Heart right ventricle (tissue), 16 donors: ENCODE measurements at regions of chr9 and their contacts with region 1.

Region 1: GRCh38 chr9:116737152-116737546 is 50.0 kb downstream of the TRIM32 start:
- DNase-seq: peak; percentile 62 to 82
- ATAC-seq: peak; percentile 28 to 80 (median 64)
- H3K4me3 ChIP-seq: no peak overlapping the region
- H3K27ac ChIP-seq: no peak overlapping the region
- H3K4me1 ChIP-seq: peaks cover 0 to 8% (median 0%) of the 10 kb centered on the region in 9 donors
- H3K27me3 ChIP-seq: peaks cover 0 to 7% (median 0%) of the 10 kb centered on the region in 7 donors
- CTCF ChIP-seq: peak; percentile 64 to 91 (median 81)

Region 2: GRCh38 chr9:116414374-116414773 is 322.8 kb before region 1 on chr9:
- intact Hi-C with region 1: no loop called
- DNase-seq: no peak
- ATAC-seq: no peak
- H3K4me3 ChIP-seq: no peak overlapping the region
- H3K27ac ChIP-seq: no peak overlapping the region
- H3K4me1 ChIP-seq: no peaks in the 10 kb centered on the region
- H3K27me3 ChIP-seq: no peaks in the 10 kb centered on the region
- CTCF ChIP-seq: no peak

Region 3: GRCh38 chr9:116860509-116861120 is 123.5 kb after region 1 on chr9:
- intact Hi-C with region 1: loop called in 9 of 10 experiments (anchors 2 to 10 kb)
- DNase-seq: peak; percentile 33 to 52
- ATAC-seq: peak in 6 of 8 donors; percentile 51 to 84 (median 66)
- H3K4me3 ChIP-seq: no peak overlapping the region
- H3K27ac ChIP-seq: no peak overlapping the region
- H3K4me1 ChIP-seq: no peaks in the 10 kb centered on the region
- H3K27me3 ChIP-seq: peaks cover 0 to 12% (median 0%) of the 10 kb centered on the region in 7 donors
- CTCF ChIP-seq: peak; percentile 35 to 74 (median 71)

Region 4: GRCh38 chr9:117411548-117411947 is 674.4 kb after region 1 on chr9:
- intact Hi-C with region 1: loop called in 2 of 10 experiments (anchors 10 kb)
- DNase-seq: peak in 1 of 2 donors; percentile 28
- ATAC-seq: peak in 4 of 8 donors; percentile 36 to 61 (median 53)
- H3K4me3 ChIP-seq: no peak overlapping the region
- H3K27ac ChIP-seq: no peak overlapping the region
- H3K4me1 ChIP-seq: peaks cover 0 to 26% (median 11%) of the 10 kb centered on the region in 9 donors
- H3K27me3 ChIP-seq: peaks cover 13 to 79% (median 57%) of the 10 kb centered on the region in 7 donors
- CTCF ChIP-seq: peak; percentile 10 to 63 (median 53)

Region 5: DNA sequence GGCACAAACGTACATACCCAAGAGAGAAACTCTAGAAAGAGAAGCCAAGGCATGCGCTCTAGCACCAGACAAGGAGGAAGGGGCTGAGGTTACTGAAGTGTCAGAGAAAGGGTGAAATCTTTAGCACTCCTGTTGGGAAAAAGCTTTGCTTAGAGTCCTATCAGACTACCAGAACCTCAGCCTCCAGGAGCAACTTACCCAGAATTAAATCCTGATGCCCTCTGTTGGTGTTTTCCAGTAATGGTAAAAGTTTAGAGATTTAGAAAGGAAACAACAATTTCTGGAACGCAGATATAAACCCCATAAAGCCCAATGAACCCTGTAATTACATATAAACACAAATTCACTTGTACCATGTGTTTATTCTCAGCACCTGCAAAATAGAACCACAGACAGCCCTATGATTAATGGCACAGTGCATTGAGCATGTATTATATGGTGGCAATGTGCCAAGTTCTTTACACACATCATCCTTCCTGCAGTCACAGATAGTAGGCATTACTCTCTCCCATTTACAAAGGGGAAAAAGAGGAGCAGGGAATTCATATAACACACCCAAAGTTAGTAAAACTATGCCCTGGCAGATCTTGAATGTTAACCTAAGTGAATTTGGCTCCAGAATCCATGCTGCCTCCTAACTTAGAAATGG is 711.0 kb after region 1 on chr9:
- intact Hi-C with region 1: no loop called
- DNase-seq: no peak
- ATAC-seq: no peak
- H3K4me3 ChIP-seq: no peak overlapping the region
- H3K27ac ChIP-seq: no peak overlapping the region
- H3K4me1 ChIP-seq: no peaks in the 10 kb centered on the region
- H3K27me3 ChIP-seq: peaks cover 0 to 33% (median 6%) of the 10 kb centered on the region in 7 donors
- CTCF ChIP-seq: peak in 1 of 9 donors; percentile 6